ENCODE measurements at regions of chr3 and their contacts with region 1.

Region 1: GRCh38 chr3:112990672-112991602 is at the start of gene GTPBP8:
- DNase-seq: peak; percentile 97
- ATAC-seq: peak; percentile 99
- total RNA-seq, gene GTPBP8: 27.6 TPM

Region 2: DNA sequence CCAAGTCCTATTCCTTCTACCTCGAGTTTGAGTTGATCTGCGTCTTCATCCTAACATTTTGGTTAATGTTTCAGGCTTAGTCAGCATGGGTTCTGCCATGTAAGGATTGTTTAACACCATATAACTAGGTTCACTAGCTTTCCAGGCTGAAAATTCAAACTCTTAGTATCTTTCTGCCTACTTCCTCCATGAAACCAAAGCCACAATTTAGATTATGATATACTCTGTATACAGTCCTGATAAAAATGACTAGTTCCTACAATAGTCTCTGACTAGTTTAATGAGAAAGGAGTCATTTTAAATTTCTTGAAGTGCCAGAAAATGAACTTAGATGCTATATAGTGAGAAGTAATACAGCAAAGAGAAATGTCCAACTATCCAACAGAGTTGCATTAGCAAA is 485.0 kb before region 1 on chr3:
- intact Hi-C with region 1: no loop called
- DNase-seq: no peak
- ATAC-seq: no peak

Region 3: GRCh38 chr3:112561731-112562688 is 428.9 kb before region 1 on chr3 and contains the starts of genes ATG3 and SLC35A5:
- intact Hi-C with region 1: loop called (anchors 10 kb)
- DNase-seq: peak; percentile 100
- ATAC-seq: peak; percentile 98
- total RNA-seq, gene ATG3: 38.2 TPM
- total RNA-seq, gene SLC35A5: 14.6 TPM

Region 4: DNA sequence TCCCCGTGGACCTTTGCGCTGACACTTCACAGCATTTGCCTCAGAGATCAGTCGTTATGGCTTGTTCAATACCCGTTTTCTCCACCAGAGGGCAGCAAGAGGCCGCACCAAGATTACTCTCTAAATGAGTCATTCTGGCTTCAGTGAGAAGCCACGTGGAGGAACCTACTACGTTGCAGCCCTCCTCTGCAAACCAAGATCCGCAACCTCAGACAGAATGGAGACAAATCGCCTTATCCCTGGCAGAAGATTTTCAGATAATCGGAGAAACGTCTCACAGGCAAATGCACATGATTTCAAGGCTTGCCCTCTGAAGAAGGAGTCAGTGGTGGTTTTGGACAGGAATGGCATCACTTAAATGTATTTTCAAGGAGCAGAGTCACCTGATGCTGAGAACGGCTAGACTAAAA is 60.4 kb after region 1 on chr3:
- intact Hi-C with region 1: no loop called
- DNase-seq: peak; percentile 64
- ATAC-seq: peak; percentile 94